ENCODE measurements at regions of chr16 and their contacts with region 1.

Region 1: GRCh38 chr16:56617177-56618085 is 8.2 kb upstream of the MT1E start:
- DNase-seq: peak; percentile 64
- H3K4me3 Mint-ChIP-seq: peak overlapping the region; percentile 87
- H3K27ac Mint-ChIP-seq: peak overlapping the region; percentile 68
- H3K4me1 Mint-ChIP-seq: peaks cover 49% of the 10 kb centered on the region
- H3K27me3 Mint-ChIP-seq: no peaks in the 10 kb centered on the region

Region 2: DNA sequence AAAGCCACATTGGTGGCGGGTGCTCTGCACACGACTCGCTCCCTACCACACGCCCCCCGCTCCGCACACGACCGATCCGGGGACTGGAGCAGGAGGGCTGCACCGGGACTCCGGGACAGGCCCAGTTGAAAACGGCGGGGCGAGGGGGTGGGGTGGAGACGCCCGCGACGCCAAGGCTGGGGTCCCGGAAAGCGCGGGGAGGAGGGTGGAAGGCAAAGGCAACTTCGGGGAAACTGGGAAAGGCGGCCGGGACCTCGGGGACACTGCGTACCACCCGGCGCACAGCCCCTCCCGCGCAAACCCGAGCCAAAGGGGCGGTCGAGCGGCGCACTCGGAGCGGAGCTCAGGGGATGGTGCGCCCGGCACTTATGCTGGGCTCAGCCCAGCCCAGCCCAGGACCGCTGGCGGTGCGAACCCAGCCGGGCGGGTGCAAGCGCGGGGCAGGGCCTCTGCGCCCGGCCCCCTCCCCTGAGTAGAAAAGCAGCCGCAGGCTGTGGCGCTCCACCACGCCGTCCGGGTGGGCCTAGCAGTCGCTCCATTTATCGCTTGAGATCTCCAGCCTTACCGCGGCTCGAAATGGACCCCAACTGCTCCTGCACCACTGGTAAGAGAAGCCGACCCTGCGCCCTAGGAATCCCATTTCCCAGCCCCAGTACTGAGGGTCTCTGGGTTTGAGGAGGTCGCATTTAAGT is 14.9 kb after region 1 on chr16 and contains the start of gene MT1M:
- intact Hi-C with region 1: loop called (anchors 2 kb)
- DNase-seq: no peak
- H3K4me3 Mint-ChIP-seq: peak within 1 kb of the TSS; percentile 62
- H3K27ac Mint-ChIP-seq: no peak within 1 kb of the TSS
- H3K4me1 Mint-ChIP-seq: peaks cover 23% of the 10 kb centered on the region
- H3K27me3 Mint-ChIP-seq: peaks cover 64% of the 10 kb centered on the region
- total RNA-seq, gene MT1M: not detected in 2 replicates